CD8-positive, alpha-beta T cell (primary cell): ENCODE measurements at regions of chr12 and their contacts with region 1.

Region 1: GRCh38 chr12:2877047-2877952 is at the starts of genes FOXM1 and RHNO1:
- DNase-seq: peak; percentile 73 to 91 (median 85)
- ATAC-seq: peak; percentile 78
- H3K4me3 ChIP-seq: peak within 1 kb of the TSS; percentile 83 to 95
- H3K4me3 Mint-ChIP-seq: peak within 1 kb of the TSS; percentile 99
- H3K27ac ChIP-seq: peak within 1 kb of the TSS; percentile 90 to 91
- H3K27ac Mint-ChIP-seq: peak within 1 kb of the TSS; percentile 100
- H3K4me1 ChIP-seq: peaks cover 22% of the 10 kb centered on the region
- H3K4me1 Mint-ChIP-seq: peaks cover 37% of the 10 kb centered on the region
- H3K27me3 ChIP-seq: no peaks in the 10 kb centered on the region
- H3K27me3 Mint-ChIP-seq: no peaks in the 10 kb centered on the region
- CTCF ChIP-seq: no peak
- total RNA-seq, gene FOXM1: 0.83 to 0.95 TPM
- total RNA-seq, gene RHNO1: 22.4 to 24.4 TPM

Region 2: DNA sequence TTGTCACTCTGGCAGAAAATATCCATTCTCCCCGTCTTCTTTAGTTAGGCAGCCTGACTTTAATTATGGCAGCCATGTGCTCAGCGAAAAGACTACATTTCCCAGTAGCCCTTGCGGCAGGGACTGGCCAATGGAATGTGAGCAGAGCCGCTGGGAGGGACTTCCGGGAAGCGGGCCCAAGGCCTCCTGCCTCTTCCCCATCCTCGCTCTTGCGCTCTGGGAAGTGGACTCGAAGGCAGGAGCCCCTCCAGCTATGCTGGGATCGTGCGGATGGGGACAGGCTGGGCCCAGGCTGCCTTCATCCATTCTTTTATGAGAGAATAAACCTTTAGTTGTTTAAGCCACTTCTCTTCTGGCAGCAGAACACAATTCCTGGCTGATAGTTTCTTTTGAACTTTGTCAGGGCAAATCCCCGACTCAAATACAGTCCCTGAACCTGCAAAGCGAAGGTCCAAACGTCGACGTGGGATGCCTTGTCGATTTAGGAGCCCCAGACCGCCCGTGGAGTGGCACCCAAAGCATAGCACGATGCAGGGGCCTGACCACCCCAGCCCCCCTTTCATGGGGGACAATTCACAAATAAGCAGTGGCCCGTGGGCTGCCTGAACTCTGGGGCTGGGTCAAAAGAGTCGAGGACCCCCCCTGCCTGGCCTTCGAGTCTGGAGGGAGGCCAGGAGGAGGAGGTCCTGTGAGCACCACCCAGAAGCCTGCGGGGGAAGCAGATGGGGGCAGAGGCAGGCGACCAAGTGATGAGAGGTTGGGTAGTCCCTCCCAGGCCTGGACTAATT is 1072.6 kb before region 1 on chr12:
- CTCF ChIA-PET with region 1: no interaction called
- POLR2A ChIA-PET with region 1: no interaction called
- intact Hi-C with region 1: loop called in 1 of 2 experiments (anchors 10 kb)
- DNase-seq: peak; percentile 69 to 93 (median 87)
- ATAC-seq: peak; percentile 97
- H3K4me3 ChIP-seq: no peak overlapping the region
- H3K4me3 Mint-ChIP-seq: no peak overlapping the region
- H3K27ac ChIP-seq: peak overlapping the region in 1 of 2 experiments; percentile 66
- H3K27ac Mint-ChIP-seq: peak overlapping the region; percentile 73
- H3K4me1 ChIP-seq: peaks cover 6% of the 10 kb centered on the region
- H3K4me1 Mint-ChIP-seq: peaks cover 10% of the 10 kb centered on the region
- H3K27me3 ChIP-seq: no peaks in the 10 kb centered on the region
- H3K27me3 Mint-ChIP-seq: no peaks in the 10 kb centered on the region
- CTCF ChIP-seq: no peak

Region 3: DNA sequence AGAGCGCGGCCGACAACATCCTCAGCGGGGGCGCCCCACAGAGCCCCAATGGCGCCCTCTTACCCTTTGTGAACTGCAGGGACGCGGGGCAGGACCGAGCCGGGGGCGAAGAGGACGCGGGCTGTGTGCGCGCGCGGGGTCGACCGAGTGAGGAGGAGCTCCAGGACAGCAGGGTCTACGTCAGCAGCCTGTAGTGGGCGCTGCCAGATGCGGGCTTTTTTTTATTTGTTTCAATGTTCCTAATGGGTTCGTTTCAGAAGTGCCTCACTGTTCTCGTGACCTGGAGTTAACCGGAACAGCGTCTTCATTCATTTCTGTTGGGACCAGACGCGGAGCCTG is 186.3 kb before region 1 on chr12:
- CTCF ChIA-PET with region 1: no interaction called
- POLR2A ChIA-PET with region 1: no interaction called
- intact Hi-C with region 1: loop called in 1 of 2 experiments (anchors 5 kb)
- DNase-seq: peak in 8 of 9 experiments; percentile 35 to 86 (median 66)
- ATAC-seq: peak; percentile 75
- H3K4me3 ChIP-seq: peak overlapping the region; percentile 50 to 80
- H3K4me3 Mint-ChIP-seq: peak overlapping the region; percentile 92
- H3K27ac ChIP-seq: peak overlapping the region; percentile 75 to 87
- H3K27ac Mint-ChIP-seq: peak overlapping the region; percentile 90
- H3K4me1 ChIP-seq: peaks cover 30% of the 10 kb centered on the region
- H3K4me1 Mint-ChIP-seq: peaks cover 48% of the 10 kb centered on the region
- H3K27me3 ChIP-seq: no peaks in the 10 kb centered on the region
- H3K27me3 Mint-ChIP-seq: no peaks in the 10 kb centered on the region
- CTCF ChIP-seq: no peak

Region 4: GRCh38 chr12:2752676-2753371 is 124.5 kb before region 1 on chr12:
- CTCF ChIA-PET with region 1: no interaction called
- POLR2A ChIA-PET with region 1: no interaction called
- intact Hi-C with region 1: loop called in 1 of 2 experiments (anchors 5 kb)
- DNase-seq: peak; percentile 63 to 87 (median 80)
- ATAC-seq: peak; percentile 100
- H3K4me3 ChIP-seq: no peak overlapping the region
- H3K4me3 Mint-ChIP-seq: no peak overlapping the region
- H3K27ac ChIP-seq: no peak overlapping the region
- H3K27ac Mint-ChIP-seq: no peak overlapping the region
- H3K4me1 ChIP-seq: peaks cover 3% of the 10 kb centered on the region
- H3K4me1 Mint-ChIP-seq: no peaks in the 10 kb centered on the region
- H3K27me3 ChIP-seq: peaks cover 0 to 5% of the 10 kb centered on the region in 2 experiments
- H3K27me3 Mint-ChIP-seq: peaks cover 34% of the 10 kb centered on the region
- CTCF ChIP-seq: no peak

Region 5: GRCh38 chr12:2890388-2891239 is 13.3 kb after region 1 on chr12 and contains the start of gene TULP3:
- CTCF ChIA-PET with region 1: interaction called, 6 read pairs
- POLR2A ChIA-PET with region 1: interaction called, 8 read pairs
- intact Hi-C with region 1: loop called (anchors 1 kb)
- DNase-seq: peak; percentile 97 to 99 (median 98)
- ATAC-seq: peak; percentile 94
- H3K4me3 ChIP-seq: peak within 1 kb of the TSS; percentile 98 to 99
- H3K4me3 Mint-ChIP-seq: peak within 1 kb of the TSS; percentile 98
- H3K27ac ChIP-seq: peak within 1 kb of the TSS; percentile 71 to 85
- H3K27ac Mint-ChIP-seq: peak within 1 kb of the TSS; percentile 95
- H3K4me1 ChIP-seq: peaks cover 16% of the 10 kb centered on the region
- H3K4me1 Mint-ChIP-seq: peaks cover 30% of the 10 kb centered on the region
- H3K27me3 ChIP-seq: no peaks in the 10 kb centered on the region
- H3K27me3 Mint-ChIP-seq: no peaks in the 10 kb centered on the region
- CTCF ChIP-seq: no peak
- total RNA-seq, gene TULP3: 2.7 to 3.0 TPM

Region 6: DNA sequence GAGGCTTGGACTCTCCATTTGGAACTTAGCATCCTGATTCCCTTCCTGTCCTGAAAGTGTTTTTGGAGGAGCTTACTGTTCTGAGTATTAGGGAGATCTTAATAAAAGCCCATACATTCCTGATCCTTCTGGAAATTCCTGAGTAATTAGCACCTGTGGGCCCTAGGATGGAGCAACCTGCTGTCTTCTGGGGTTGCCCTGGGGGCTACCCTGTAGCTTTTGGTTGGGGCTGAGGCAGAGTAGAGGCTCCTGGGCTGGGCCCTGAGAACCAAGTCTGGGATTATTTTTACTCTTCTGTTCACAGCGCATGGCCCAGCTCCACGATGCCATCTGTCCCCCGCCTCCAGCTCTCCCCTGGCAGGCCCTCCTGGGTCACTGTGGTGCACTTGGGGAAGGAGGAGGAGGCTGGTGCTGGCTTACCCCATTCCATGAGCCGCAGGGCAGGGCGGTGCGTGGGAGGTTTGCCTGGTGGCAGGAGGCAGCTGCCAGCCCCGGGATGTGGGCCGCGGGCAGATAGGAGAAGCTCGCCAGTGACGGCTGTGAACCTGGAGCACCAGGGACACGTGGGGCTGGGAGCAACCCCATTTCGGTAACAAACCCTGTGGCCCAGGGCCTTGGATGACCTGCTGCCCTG is 104.9 kb after region 1 on chr12:
- CTCF ChIA-PET with region 1: no interaction called
- POLR2A ChIA-PET with region 1: no interaction called
- intact Hi-C with region 1: no loop called
- DNase-seq: no peak
- ATAC-seq: no peak
- H3K4me3 ChIP-seq: no peak overlapping the region
- H3K4me3 Mint-ChIP-seq: no peak overlapping the region
- H3K27ac ChIP-seq: no peak overlapping the region
- H3K27ac Mint-ChIP-seq: no peak overlapping the region
- H3K4me1 ChIP-seq: no peaks in the 10 kb centered on the region
- H3K4me1 Mint-ChIP-seq: no peaks in the 10 kb centered on the region
- H3K27me3 ChIP-seq: no peaks in the 10 kb centered on the region
- H3K27me3 Mint-ChIP-seq: peaks cover 2% of the 10 kb centered on the region
- CTCF ChIP-seq: no peak